Activated B cell treated with CpG ODN at 0.5 μM for 24 hours (primary cell): ENCODE measurements at regions of chr7 and their contacts with region 1.

Region 1: GRCh38 chr7:120792091-120792860 is 65.7 kb downstream of the TSPAN12 start:
- DNase-seq: peak; percentile 50
- ATAC-seq: peak; percentile 73
- H3K4me3 Mint-ChIP-seq: no peak overlapping the region
- H3K27ac Mint-ChIP-seq: no peak overlapping the region
- H3K4me1 Mint-ChIP-seq: no peaks in the 10 kb centered on the region
- H3K27me3 Mint-ChIP-seq: peaks cover 2% of the 10 kb centered on the region
- CTCF ChIP-seq: peak; percentile 74

Region 2: GRCh38 chr7:120615703-120616102 is 176.6 kb before region 1 on chr7:
- CTCF ChIA-PET with region 1: no interaction called
- POLR2A ChIA-PET with region 1: no interaction called
- intact Hi-C with region 1: no loop called
- DNase-seq: no peak
- ATAC-seq: no peak
- H3K4me3 Mint-ChIP-seq: no peak overlapping the region
- H3K27ac Mint-ChIP-seq: no peak overlapping the region
- H3K4me1 Mint-ChIP-seq: no peaks in the 10 kb centered on the region
- H3K27me3 Mint-ChIP-seq: no peaks in the 10 kb centered on the region
- CTCF ChIP-seq: no peak

Region 3: GRCh38 chr7:120774481-120774880 is 17.8 kb before region 1 on chr7:
- CTCF ChIA-PET with region 1: no interaction called
- POLR2A ChIA-PET with region 1: no interaction called
- intact Hi-C with region 1: no loop called
- DNase-seq: no peak
- ATAC-seq: no peak
- H3K4me3 Mint-ChIP-seq: no peak overlapping the region
- H3K27ac Mint-ChIP-seq: no peak overlapping the region
- H3K4me1 Mint-ChIP-seq: no peaks in the 10 kb centered on the region
- H3K27me3 Mint-ChIP-seq: peaks cover 2% of the 10 kb centered on the region
- CTCF ChIP-seq: no peak

Region 4: GRCh38 chr7:120941064-120941463 is 148.8 kb after region 1 on chr7:
- CTCF ChIA-PET with region 1: interaction called, 5 read pairs
- POLR2A ChIA-PET with region 1: no interaction called
- intact Hi-C with region 1: loop called (anchors 1 kb)
- DNase-seq: no peak
- ATAC-seq: no peak
- H3K4me3 Mint-ChIP-seq: no peak overlapping the region
- H3K27ac Mint-ChIP-seq: no peak overlapping the region
- H3K4me1 Mint-ChIP-seq: no peaks in the 10 kb centered on the region
- H3K27me3 Mint-ChIP-seq: no peaks in the 10 kb centered on the region
- CTCF ChIP-seq: no peak

Region 5: DNA sequence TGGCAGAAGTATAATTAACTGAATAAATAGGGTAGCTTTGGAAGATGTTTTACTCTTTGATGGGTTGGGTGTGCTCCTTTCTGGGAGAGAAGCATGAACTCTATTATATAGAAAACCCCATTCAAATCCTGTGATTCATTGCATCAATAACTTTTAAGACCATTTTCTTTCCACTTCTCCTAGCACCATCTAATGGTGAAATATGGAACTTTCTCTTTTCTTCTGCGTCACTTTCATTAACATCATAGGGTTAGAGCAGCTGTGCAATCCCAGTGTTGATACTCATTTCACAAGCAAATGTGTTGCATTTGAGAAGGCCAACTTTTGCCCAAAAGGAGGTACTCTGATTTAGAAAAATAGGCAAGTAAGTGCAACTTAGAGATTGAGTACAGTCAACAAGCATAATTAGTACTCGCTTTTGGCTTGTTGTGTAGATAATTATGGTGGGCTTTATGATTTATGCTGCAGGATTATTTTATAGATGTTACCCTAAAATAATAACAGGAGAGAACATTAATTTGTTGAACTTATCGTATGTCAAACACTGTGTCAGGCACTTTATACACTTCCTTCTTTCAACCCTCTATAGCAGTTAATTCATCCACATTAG is 289.2 kb after region 1 on chr7:
- CTCF ChIA-PET with region 1: interaction called, 13 read pairs
- POLR2A ChIA-PET with region 1: no interaction called
- intact Hi-C with region 1: loop called (anchors 1 kb)
- DNase-seq: no peak
- ATAC-seq: peak; percentile 83
- H3K4me3 Mint-ChIP-seq: no peak overlapping the region
- H3K27ac Mint-ChIP-seq: no peak overlapping the region
- H3K4me1 Mint-ChIP-seq: peaks cover 11% of the 10 kb centered on the region
- H3K27me3 Mint-ChIP-seq: peaks cover 3% of the 10 kb centered on the region
- CTCF ChIP-seq: peak; percentile 46

Region 6: DNA sequence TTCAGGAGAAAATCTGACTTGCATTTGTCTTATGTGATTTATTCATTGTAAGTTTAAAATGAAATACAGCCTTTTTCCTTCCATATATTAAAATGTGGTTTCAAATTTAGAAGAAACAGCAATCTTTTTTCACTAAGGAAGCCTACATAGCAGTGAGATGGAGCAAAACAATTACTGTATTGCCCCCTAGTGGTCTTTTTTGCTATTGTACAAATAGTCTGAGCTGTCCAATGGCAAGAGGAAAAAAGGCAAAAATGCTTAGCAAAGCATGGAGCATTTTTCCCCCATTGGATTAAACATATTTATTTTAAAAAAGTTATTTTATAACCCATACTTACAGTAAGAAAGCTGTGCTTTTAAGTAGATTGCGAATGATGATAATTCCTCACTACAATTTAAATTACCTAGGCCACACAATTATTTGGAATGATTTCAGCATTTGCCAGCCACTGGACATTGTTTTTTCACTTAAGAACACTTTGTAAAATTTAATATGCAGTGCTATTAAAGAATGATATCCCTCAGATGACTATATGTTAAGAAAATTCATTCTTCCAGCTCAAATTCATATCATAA is 315.7 kb after region 1 on chr7:
- CTCF ChIA-PET with region 1: interaction called, 10 read pairs
- POLR2A ChIA-PET with region 1: no interaction called
- intact Hi-C with region 1: loop called (anchors 1 kb)
- DNase-seq: no peak
- ATAC-seq: peak; percentile 77
- H3K4me3 Mint-ChIP-seq: no peak overlapping the region
- H3K27ac Mint-ChIP-seq: no peak overlapping the region
- H3K4me1 Mint-ChIP-seq: no peaks in the 10 kb centered on the region
- H3K27me3 Mint-ChIP-seq: no peaks in the 10 kb centered on the region
- CTCF ChIP-seq: peak; percentile 83

Region 7: DNA sequence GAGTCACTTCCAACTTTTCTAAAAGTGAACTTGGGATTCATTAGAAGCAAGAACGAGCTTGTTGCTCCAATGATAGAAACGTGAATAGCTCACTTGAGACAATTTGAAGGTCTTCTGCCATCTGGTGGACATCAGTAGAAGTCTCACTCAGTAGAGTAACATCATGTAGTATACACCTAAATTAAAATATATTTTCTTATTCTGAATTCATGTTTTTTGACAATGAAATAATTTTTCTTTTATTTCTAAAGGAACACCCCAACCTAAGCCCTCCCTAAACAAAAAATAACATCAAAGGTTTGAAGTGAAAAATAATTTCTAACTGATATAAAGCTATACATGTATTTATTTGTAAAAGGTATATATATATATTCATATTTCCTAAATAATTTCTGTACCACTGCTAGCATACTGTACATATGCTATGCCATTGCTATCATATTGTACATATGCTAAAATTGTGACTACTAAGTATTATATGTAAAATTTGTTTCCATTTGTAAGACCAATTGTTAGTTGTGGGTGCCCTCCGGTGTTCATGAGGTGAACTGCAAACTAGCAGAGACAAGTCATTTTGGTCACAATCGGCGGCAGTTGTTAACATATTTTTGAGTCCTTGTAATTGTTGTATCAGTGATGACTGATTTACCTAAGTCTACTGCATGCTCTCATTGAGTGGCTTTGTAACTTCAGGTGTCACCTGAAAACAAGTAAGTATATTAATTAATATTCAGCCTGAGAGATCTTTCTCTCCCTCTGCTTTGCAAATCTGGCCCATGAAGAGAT is 1202.5 kb after region 1 on chr7:
- CTCF ChIA-PET with region 1: interaction called, 6 read pairs
- POLR2A ChIA-PET with region 1: no interaction called
- intact Hi-C with region 1: loop called (anchors 1 kb)
- DNase-seq: no peak
- ATAC-seq: peak; percentile 86
- H3K4me3 Mint-ChIP-seq: no peak overlapping the region
- H3K27ac Mint-ChIP-seq: no peak overlapping the region
- H3K4me1 Mint-ChIP-seq: no peaks in the 10 kb centered on the region
- H3K27me3 Mint-ChIP-seq: peaks cover 2% of the 10 kb centered on the region
- CTCF ChIP-seq: peak; percentile 83